OCI-LY7 (cell line): ENCODE measurements at regions of chr7 and their contacts with region 1.

Region 1: DNA sequence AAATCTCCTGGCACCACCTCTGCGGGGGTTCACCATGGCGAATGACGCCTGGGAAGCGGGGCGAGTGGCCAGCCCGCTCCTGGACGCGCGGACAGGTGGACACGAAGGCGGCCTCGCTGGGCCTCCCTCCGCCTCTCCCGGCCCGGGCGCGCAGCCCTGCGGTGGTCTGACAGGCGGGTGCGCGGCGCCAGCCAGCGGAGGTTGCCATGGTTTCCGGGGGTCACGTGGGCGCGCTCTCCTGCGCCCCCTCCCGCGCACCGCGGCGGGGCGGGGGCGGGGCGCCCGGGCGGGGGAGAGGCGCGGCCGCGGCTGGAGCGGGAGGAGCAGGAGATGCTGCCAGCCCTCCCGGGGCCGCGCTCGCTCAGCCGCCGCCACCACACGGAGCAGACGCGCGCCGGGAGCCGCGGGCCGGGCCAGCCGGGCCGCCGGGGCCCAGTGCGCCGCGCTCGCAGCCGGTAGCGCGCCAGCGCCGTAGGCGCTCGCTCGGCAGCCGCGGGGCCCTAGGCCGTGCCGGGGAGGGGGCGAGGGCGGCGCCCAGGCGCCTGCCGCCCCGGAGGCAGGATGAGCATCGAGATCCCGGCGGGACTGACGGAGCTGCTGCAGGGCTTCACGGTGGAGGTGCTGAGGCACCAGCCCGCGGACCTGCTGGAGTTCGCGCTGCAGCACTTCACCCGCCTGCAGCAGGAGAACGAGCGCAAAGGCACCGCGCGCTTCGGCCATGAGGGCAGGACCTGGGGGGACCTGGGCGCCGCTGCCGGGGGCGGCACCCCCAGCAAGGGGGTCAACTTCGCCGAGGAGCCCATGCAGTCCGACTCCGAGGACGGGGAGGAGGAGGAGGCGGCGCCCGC is at the start of gene PRKAR2B:
- DNase-seq: peak; percentile 91
- H3K4me3 ChIP-seq: peak within 1 kb of the TSS; percentile 94
- H3K27ac ChIP-seq: peak within 1 kb of the TSS; percentile 59
- H3K4me1 ChIP-seq: peaks cover 37% of the 10 kb centered on the region
- CTCF ChIP-seq: no peak
- total RNA-seq, gene PRKAR2B: 69.0 and 91.1 TPM in 2 replicates

Region 2: GRCh38 chr7:106870983-106871410 is 173.6 kb before region 1 on chr7:
- CTCF ChIA-PET with region 1: no interaction called
- POLR2A ChIA-PET with region 1: interaction called, 3 read pairs
- intact Hi-C with region 1: loop called (anchors 5 kb)
- DNase-seq: peak; percentile 84
- H3K4me3 ChIP-seq: peak overlapping the region; percentile 65
- H3K27ac ChIP-seq: peak overlapping the region; percentile 79
- H3K4me1 ChIP-seq: peaks cover 64% of the 10 kb centered on the region
- CTCF ChIP-seq: no peak

Region 3: DNA sequence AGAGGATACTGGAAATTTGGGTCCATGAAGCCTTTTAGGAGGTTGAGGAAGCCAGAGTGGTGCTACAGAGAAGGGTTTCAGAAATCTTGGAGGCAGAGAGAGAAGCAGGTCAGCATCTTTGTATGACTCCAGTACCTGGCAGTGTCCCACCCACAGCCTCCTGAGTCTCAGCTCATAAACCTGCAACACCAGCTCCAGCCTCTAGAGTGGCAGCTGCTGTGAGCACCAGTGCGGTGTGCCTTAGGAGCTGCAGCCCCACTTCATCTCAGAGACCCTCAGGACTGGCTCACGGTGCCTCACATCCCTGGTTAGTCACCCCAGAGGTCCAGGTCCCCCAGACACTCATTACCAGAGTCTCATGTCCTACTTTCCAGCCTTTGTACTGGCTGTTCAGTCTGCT is 84.8 kb before region 1 on chr7:
- CTCF ChIA-PET with region 1: no interaction called
- POLR2A ChIA-PET with region 1: interaction called, 4 read pairs
- intact Hi-C with region 1: loop called (anchors 5 kb)
- DNase-seq: peak; percentile 70
- H3K4me3 ChIP-seq: no peak overlapping the region
- H3K27ac ChIP-seq: no peak overlapping the region
- H3K4me1 ChIP-seq: peaks cover 64% of the 10 kb centered on the region
- CTCF ChIP-seq: peak; percentile 71

Region 4: GRCh38 chr7:107069457-107069856 is 24.9 kb after region 1 on chr7:
- CTCF ChIA-PET with region 1: no interaction called
- POLR2A ChIA-PET with region 1: interaction called, 12 read pairs
- intact Hi-C with region 1: loop called (anchors 1 kb)
- DNase-seq: no peak
- H3K4me3 ChIP-seq: peak overlapping the region; percentile 60
- H3K27ac ChIP-seq: peak overlapping the region; percentile 67
- H3K4me1 ChIP-seq: peaks cover 60% of the 10 kb centered on the region
- CTCF ChIP-seq: no peak

Region 5: GRCh38 chr7:107150375-107151073 is 106.0 kb after region 1 on chr7:
- CTCF ChIA-PET with region 1: no interaction called
- POLR2A ChIA-PET with region 1: interaction called, 4 read pairs
- intact Hi-C with region 1: loop called (anchors 1 kb)
- DNase-seq: peak; percentile 84
- H3K4me3 ChIP-seq: no peak overlapping the region
- H3K27ac ChIP-seq: no peak overlapping the region
- H3K4me1 ChIP-seq: peaks cover 41% of the 10 kb centered on the region
- CTCF ChIP-seq: peak; percentile 95

Region 6: GRCh38 chr7:107743567-107744344 is 699.2 kb after region 1 on chr7 and contains the start of gene CBLL1:
- CTCF ChIA-PET with region 1: no interaction called
- POLR2A ChIA-PET with region 1: no interaction called
- intact Hi-C with region 1: loop called (anchors 5 kb)
- DNase-seq: peak; percentile 97
- H3K4me3 ChIP-seq: peak within 1 kb of the TSS; percentile 90
- H3K27ac ChIP-seq: peak within 1 kb of the TSS; percentile 95
- H3K4me1 ChIP-seq: peaks cover 51% of the 10 kb centered on the region
- CTCF ChIP-seq: peak; percentile 81
- total RNA-seq, gene CBLL1: 22.9 and 25.7 TPM in 2 replicates